ENCODE measurements at regions of chr20 and their contacts with region 1.

Region 1: DNA sequence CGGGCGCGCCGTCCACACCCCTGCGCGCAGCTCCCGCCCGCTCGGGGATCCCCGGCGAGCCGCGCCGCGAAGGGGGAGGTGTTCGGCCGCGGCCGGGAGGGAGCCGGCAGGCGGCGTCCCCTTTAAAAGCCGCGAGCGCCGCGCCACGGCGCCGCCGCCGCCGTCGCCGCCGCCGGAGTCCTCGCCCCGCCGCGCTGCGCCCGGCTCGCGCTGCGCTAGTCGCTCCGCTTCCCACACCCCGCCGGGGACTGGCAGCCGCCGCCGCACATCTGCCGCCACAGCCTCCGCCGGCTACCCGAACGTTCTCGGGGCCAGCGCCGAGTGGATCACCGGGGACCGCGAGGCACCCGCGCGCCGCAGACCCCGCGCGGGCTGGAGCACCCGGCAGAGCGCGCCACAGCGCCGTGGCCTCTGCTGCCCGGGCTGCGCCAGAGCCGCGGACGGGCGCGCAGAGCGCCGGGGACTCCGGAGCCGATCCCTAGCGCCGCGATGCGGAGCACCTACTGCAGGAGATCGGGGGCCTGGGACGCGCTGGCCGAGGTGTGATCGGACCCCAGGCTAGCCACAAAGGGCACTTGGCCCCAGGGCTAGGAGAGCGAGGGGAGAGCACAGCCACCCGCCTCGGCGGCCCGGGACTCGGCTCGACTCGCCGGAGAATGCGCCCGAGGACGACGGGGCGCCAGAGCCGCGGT is at the start of gene BMP2:
- DNase-seq: no peak
- H3K4me3 Mint-ChIP-seq: no peak within 1 kb of the TSS
- H3K27ac Mint-ChIP-seq: no peak within 1 kb of the TSS
- H3K4me1 Mint-ChIP-seq: peaks cover 3% of the 10 kb centered on the region
- H3K27me3 Mint-ChIP-seq: peaks cover 52% of the 10 kb centered on the region
- total RNA-seq, gene BMP2: not detected

Region 2: DNA sequence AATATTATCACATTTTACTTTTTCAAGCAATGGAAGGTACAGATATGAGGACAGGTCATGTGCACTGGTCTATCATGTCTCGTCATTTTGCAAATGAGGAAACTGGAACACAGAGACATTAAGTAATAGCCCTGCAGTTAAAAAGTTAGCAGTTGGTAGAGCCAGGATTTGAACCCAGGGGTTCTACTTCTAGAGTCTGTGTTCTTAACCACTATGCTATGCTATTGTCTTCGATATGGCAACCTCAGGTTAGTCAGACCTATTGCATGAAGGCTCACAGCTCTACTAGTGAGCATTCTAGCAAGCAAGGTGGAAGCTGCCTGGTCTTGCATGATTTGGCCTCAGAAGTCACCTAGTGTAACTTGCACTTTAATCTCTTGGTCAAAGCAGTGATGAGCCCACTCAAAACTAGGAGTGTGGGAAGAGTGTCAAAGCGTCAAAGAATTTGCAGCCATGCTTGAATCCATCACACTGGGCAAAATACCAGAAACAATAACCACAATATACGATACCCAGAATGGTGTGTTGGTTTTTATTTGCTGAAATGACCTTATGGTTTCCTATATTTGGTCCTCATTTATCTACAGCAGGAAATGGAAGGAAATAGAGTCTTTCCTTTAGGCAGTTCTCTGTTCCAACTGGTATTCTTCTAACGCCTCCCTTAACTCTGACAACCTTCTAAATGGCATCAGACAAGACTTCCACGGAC is 20.6 kb before region 1 on chr20:
- CTCF ChIA-PET with region 1: no interaction called
- POLR2A ChIA-PET with region 1: no interaction called
- intact Hi-C with region 1: no loop called
- DNase-seq: no peak
- H3K4me3 Mint-ChIP-seq: no peak overlapping the region
- H3K27ac Mint-ChIP-seq: no peak overlapping the region
- H3K4me1 Mint-ChIP-seq: no peaks in the 10 kb centered on the region
- H3K27me3 Mint-ChIP-seq: no peaks in the 10 kb centered on the region

Region 3: GRCh38 chr20:7094438-7094997 is 326.8 kb after region 1 on chr20:
- CTCF ChIA-PET with region 1: no interaction called
- POLR2A ChIA-PET with region 1: no interaction called
- intact Hi-C with region 1: loop called (anchors 10 kb)
- DNase-seq: peak; percentile 13
- H3K4me3 Mint-ChIP-seq: no peak overlapping the region
- H3K27ac Mint-ChIP-seq: no peak overlapping the region
- H3K4me1 Mint-ChIP-seq: no peaks in the 10 kb centered on the region
- H3K27me3 Mint-ChIP-seq: no peaks in the 10 kb centered on the region

Region 4: DNA sequence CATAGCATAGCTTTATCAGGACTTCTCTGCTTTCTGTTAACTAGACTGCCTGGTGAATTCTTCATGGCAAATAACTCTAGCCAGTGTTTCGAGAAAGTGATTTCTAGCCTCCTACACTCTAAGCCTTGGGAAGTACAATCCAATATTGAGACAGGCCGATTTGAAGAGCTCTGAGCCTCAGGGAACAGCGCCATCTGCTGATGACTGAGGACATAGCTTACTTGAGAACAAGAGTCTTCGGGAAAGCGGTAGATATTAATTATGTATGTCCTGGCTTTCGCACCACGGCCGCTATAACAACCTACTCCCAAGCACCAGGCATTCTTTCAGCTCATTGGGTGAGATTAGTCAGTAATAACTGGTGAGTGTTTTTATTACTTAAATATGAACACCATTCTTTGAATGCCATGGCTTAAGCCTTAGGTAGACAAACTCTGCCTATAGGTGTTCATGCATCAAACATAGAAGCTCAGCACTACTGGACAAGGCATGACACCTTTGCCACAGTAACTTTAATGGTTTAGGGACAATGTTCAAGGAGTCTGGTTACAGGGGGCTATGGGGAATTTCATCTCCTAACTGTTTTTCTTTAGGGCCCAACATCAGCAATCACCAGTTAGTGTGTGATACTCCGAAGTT is 518.4 kb after region 1 on chr20:
- CTCF ChIA-PET with region 1: no interaction called
- POLR2A ChIA-PET with region 1: no interaction called
- intact Hi-C with region 1: loop called (anchors 5 kb)
- DNase-seq: peak; percentile 30
- H3K4me3 Mint-ChIP-seq: no peak overlapping the region
- H3K27ac Mint-ChIP-seq: no peak overlapping the region
- H3K4me1 Mint-ChIP-seq: no peaks in the 10 kb centered on the region
- H3K27me3 Mint-ChIP-seq: no peaks in the 10 kb centered on the region

Region 5: GRCh38 chr20:7926767-7927166 is 1159.1 kb after region 1 on chr20:
- CTCF ChIA-PET with region 1: no interaction called
- POLR2A ChIA-PET with region 1: no interaction called
- intact Hi-C with region 1: loop called (anchors 5 kb)
- DNase-seq: no peak
- H3K4me3 Mint-ChIP-seq: no peak overlapping the region
- H3K27ac Mint-ChIP-seq: no peak overlapping the region
- H3K4me1 Mint-ChIP-seq: no peaks in the 10 kb centered on the region
- H3K27me3 Mint-ChIP-seq: peaks cover 8% of the 10 kb centered on the region

Measured in activated CD4-positive, alpha-beta memory T cell treated with anti-CD3 and anti-CD28 coated beads for 36 hours (primary cell).